ENCODE measurements at regions of chr6 and their contacts with region 1.

Region 1: GRCh38 chr6:70884074-70884983 is 72.5 kb downstream of the B3GAT2 start:
- H3K4me3 Mint-ChIP-seq: no peak overlapping the region
- H3K27ac Mint-ChIP-seq: no peak overlapping the region
- H3K4me1 Mint-ChIP-seq: no peaks in the 10 kb centered on the region
- H3K27me3 Mint-ChIP-seq: no peaks in the 10 kb centered on the region

Region 2: GRCh38 chr6:70221025-70221714 is 663.2 kb before region 1 on chr6:
- intact Hi-C with region 1: loop called (anchors 10 kb)
- H3K4me3 Mint-ChIP-seq: no peak overlapping the region
- H3K27ac Mint-ChIP-seq: no peak overlapping the region
- H3K4me1 Mint-ChIP-seq: no peaks in the 10 kb centered on the region
- H3K27me3 Mint-ChIP-seq: no peaks in the 10 kb centered on the region

Region 3: DNA sequence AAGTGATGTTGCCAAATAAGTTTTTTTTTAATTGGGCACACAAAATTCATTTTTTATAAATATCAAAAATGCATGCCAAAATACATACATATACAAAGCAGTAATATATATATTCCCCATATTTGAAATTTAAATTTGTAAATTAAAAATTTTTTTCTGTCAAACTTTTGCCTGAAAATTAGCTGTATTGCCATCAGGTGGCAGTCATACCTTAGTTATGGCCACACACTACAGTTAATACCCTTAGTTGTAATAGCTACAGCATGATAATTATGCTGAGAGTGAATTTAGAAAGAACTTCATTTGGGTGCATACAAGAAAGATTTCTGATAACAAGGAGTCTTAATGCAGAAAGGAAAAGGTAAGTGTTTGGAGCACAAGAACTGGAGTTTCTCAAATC is 363.8 kb before region 1 on chr6:
- intact Hi-C with region 1: loop called (anchors 2 kb)
- H3K4me3 Mint-ChIP-seq: no peak overlapping the region
- H3K27ac Mint-ChIP-seq: no peak overlapping the region
- H3K4me1 Mint-ChIP-seq: no peaks in the 10 kb centered on the region
- H3K27me3 Mint-ChIP-seq: no peaks in the 10 kb centered on the region

Region 4: DNA sequence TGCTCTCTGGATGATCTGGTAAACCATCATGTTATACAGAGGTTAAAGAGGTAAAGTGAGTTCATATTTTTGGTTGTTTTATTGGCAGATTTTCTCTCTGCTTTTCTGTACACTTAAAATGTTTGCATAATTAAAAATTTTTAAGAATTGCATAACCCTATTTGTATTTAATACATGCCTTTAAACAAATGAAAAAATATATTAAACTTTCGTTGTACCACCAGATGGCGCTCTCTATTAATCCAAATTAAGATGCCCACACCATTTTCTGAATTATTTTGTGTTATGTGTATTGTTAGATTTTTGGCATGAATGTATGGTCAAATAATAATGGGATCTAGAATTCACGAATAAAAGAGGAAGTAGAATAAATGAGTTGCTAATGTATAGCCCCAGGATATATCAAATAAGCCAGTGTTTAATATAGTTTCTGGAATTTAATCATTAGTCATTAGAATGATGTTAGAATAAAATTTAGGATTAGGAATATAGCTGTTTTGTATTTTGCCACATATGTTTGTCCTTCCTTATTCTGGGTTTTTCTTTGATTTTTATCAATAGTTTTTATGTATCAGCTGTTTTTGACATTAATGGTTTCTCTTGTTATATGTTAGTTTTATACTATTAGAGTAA is 177.7 kb before region 1 on chr6:
- intact Hi-C with region 1: loop called (anchors 1 kb)
- H3K4me3 Mint-ChIP-seq: no peak overlapping the region
- H3K27ac Mint-ChIP-seq: no peak overlapping the region
- H3K4me1 Mint-ChIP-seq: peaks cover 23% of the 10 kb centered on the region
- H3K27me3 Mint-ChIP-seq: no peaks in the 10 kb centered on the region